Naive thymus-derived CD4-positive, alpha-beta T cell (primary cell): ENCODE measurements at regions of chr19 and their contacts with region 1.

Region 1: GRCh38 chr19:38899447-38900219 is at the starts of genes NFKBIB and SIRT2:
- DNase-seq: peak; percentile 86 to 100 (median 99)
- ATAC-seq: peak; percentile 93
- H3K4me3 ChIP-seq: peak within 1 kb of the TSS; percentile 74
- H3K4me3 Mint-ChIP-seq: peak within 1 kb of the TSS; percentile 88 to 100 (median 96)
- H3K27ac ChIP-seq: peak within 1 kb of the TSS; percentile 97
- H3K27ac Mint-ChIP-seq: peak within 1 kb of the TSS; percentile 86 to 99 (median 94)
- H3K4me1 ChIP-seq: peaks cover 15 to 29% of the 10 kb centered on the region in 2 donors
- H3K4me1 Mint-ChIP-seq: peaks cover 27 to 74% (median 50%) of the 10 kb centered on the region in 7 donors
- H3K27me3 ChIP-seq: no peaks in the 10 kb centered on the region
- H3K27me3 Mint-ChIP-seq: no peaks in the 10 kb centered on the region
- total RNA-seq, gene NFKBIB: 21.7 to 51.8 (median 34.1) TPM
- total RNA-seq, gene SIRT2: 42.9 to 78.5 (median 54.0) TPM

Region 2: GRCh38 chr19:38666663-38667511 is 232.7 kb before region 1 on chr19:
- CTCF ChIA-PET with region 1: no interaction called
- POLR2A ChIA-PET with region 1: no interaction called
- intact Hi-C with region 1: no loop called
- DNase-seq: no peak
- ATAC-seq: peak; percentile 48
- H3K4me3 ChIP-seq: no peak overlapping the region
- H3K4me3 Mint-ChIP-seq: peak overlapping the region in 8 of 10 donors; percentile 7 to 70 (median 28)
- H3K27ac ChIP-seq: no peak overlapping the region
- H3K27ac Mint-ChIP-seq: peak overlapping the region in 1 of 9 donors; percentile 71
- H3K4me1 ChIP-seq: peaks cover 38 to 88% of the 10 kb centered on the region in 2 donors
- H3K4me1 Mint-ChIP-seq: peaks cover 34 to 88% (median 65%) of the 10 kb centered on the region in 7 donors
- H3K27me3 ChIP-seq: peaks cover 0 to 7% of the 10 kb centered on the region in 2 donors
- H3K27me3 Mint-ChIP-seq: peaks cover 0 to 30% (median 25%) of the 10 kb centered on the region in 5 donors

Region 3: DNA sequence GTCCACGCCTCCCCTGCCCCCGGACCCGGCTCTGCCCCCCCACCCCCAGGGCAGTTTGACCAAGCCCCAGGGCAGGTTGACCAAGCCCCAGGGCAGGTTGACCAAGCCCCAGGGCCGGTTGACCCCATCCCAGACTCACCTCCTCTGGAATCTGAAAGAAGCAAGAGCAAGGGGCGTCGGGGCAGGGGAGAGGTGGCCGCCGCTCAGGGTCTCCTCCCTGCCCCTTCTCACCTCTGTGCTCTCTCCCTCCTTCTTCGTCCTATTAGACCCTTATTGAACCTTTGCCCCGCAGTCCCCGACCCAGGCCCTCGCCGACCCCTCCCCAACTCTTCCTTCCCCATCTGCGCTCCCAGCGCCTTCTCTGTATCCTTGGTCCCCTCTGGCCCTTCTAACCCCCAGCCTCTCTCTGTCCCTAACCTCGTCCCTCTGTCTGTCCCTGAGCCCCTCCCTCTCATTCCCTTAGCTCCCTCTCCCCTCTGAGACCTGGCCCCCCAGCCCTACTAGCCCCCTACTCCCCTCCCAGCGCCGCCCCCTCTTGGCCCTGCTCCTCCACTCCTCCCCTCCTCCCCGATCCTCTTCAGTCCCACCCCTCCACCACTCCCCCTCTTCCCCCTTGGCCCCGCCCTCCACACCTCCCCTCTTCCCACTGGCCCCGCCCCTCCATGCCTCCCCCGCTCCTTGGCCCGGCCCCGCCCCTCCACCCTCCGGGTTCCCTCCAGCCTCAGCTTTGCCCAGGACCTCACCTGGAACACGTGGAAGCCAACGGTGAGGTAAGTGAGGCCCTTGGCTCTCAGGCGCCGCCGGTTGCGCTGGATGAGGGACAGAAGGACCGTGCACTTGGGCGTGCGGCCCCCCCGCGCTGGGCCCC is 163.0 kb before region 1 on chr19:
- CTCF ChIA-PET with region 1: no interaction called
- POLR2A ChIA-PET with region 1: no interaction called
- intact Hi-C with region 1: loop called in 1 of 2 experiments (anchors 1 kb)
- DNase-seq: peak in 6 of 9 donors; percentile 31 to 69 (median 41)
- ATAC-seq: peak; percentile 63
- H3K4me3 ChIP-seq: peak overlapping the region; percentile 24
- H3K4me3 Mint-ChIP-seq: peak overlapping the region; percentile 35 to 83 (median 62)
- H3K27ac ChIP-seq: no peak overlapping the region
- H3K27ac Mint-ChIP-seq: peak overlapping the region in 5 of 9 donors; percentile 13 to 76 (median 36)
- H3K4me1 ChIP-seq: peaks cover 15 to 27% of the 10 kb centered on the region in 2 donors
- H3K4me1 Mint-ChIP-seq: peaks cover 7 to 47% (median 29%) of the 10 kb centered on the region in 7 donors
- H3K27me3 ChIP-seq: no peaks in the 10 kb centered on the region
- H3K27me3 Mint-ChIP-seq: peaks cover 0 to 10% (median 0%) of the 10 kb centered on the region in 5 donors

Region 4: DNA sequence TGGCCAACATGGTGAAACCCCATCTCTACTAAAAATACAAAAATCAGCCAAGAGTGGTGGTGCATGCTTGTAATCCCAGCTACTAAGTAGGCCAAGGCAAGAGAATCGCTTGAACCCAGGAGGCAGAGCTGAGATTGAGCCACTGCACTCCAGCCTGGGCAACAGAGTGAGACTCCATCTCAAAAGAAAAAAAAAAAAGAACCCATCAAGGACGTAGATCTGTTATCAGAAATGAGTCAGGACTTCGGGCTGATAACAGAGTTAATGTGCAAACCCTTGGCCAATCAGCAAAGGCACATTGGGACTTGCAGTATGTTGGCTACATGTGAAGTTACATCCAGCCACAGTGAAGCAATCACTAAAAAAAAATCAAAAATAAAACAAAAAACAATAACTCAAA is 115.4 kb before region 1 on chr19:
- CTCF ChIA-PET with region 1: no interaction called
- POLR2A ChIA-PET with region 1: no interaction called
- intact Hi-C with region 1: no loop called
- DNase-seq: no peak
- ATAC-seq: no peak
- H3K4me3 ChIP-seq: no peak overlapping the region
- H3K4me3 Mint-ChIP-seq: no peak overlapping the region
- H3K27ac ChIP-seq: no peak overlapping the region
- H3K27ac Mint-ChIP-seq: no peak overlapping the region
- H3K4me1 ChIP-seq: no peaks in the 10 kb centered on the region
- H3K4me1 Mint-ChIP-seq: no peaks in the 10 kb centered on the region
- H3K27me3 ChIP-seq: no peaks in the 10 kb centered on the region
- H3K27me3 Mint-ChIP-seq: peaks cover 0 to 22% (median 0%) of the 10 kb centered on the region in 5 donors

Region 5: DNA sequence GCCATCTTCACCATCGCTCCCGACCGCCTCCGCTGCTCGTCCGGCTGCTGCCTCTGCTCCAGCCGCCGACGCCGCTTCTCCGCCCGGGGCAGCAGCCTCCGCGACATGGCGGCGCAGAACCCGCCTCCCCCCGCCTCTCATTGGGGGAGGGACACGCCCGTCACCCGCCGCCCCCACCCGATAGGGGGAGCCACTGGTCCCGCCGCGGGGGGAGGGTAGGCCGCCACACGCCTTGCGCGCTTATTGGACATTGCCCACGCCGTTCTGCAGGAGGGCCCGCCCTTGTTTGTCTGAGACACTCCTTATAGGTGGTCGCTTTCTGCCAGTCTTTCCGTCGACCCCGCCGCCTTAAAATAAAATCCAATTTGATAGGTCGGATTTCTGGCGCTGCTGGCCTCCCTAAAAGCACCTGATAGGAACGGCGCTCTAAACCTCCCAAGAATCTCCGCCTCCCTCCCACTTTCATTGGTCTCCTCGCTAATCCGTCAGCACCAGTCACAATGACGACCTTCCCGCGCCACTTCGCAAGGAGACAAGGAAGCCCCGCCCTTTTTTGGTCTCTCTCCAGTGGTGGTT is 49.7 kb before region 1 on chr19 and contains the start of gene HNRNPL:
- CTCF ChIA-PET with region 1: no interaction called
- POLR2A ChIA-PET with region 1: interaction called, 11 read pairs
- intact Hi-C with region 1: loop called (anchors 1 kb)
- DNase-seq: peak; percentile 99 to 100 (median 100)
- ATAC-seq: peak; percentile 78
- H3K4me3 ChIP-seq: peak within 1 kb of the TSS; percentile 81
- H3K4me3 Mint-ChIP-seq: peak within 1 kb of the TSS; percentile 88 to 99 (median 96)
- H3K27ac ChIP-seq: peak within 1 kb of the TSS; percentile 96
- H3K27ac Mint-ChIP-seq: peak within 1 kb of the TSS; percentile 94 to 100 (median 99)
- H3K4me1 ChIP-seq: peaks cover 24 to 41% of the 10 kb centered on the region in 2 donors
- H3K4me1 Mint-ChIP-seq: peaks cover 30 to 67% (median 50%) of the 10 kb centered on the region in 7 donors
- H3K27me3 ChIP-seq: no peaks in the 10 kb centered on the region
- H3K27me3 Mint-ChIP-seq: peaks cover 0 to 5% (median 0%) of the 10 kb centered on the region in 5 donors
- total RNA-seq, gene HNRNPL: 339 to 539 (median 505) TPM

Region 6: GRCh38 chr19:38877781-38878574 is 21.7 kb before region 1 on chr19 and contains the start of gene RINL:
- CTCF ChIA-PET with region 1: no interaction called
- POLR2A ChIA-PET with region 1: interaction called, 12 read pairs
- intact Hi-C with region 1: loop called (anchors 1 kb)
- DNase-seq: peak; percentile 41 to 78 (median 74)
- ATAC-seq: peak; percentile 94
- H3K4me3 ChIP-seq: peak within 1 kb of the TSS; percentile 60
- H3K4me3 Mint-ChIP-seq: peak within 1 kb of the TSS; percentile 58 to 98 (median 88)
- H3K27ac ChIP-seq: peak within 1 kb of the TSS; percentile 93
- H3K27ac Mint-ChIP-seq: peak within 1 kb of the TSS; percentile 95 to 99 (median 97)
- H3K4me1 ChIP-seq: peaks cover 22 to 30% of the 10 kb centered on the region in 2 donors
- H3K4me1 Mint-ChIP-seq: peaks cover 15 to 47% (median 30%) of the 10 kb centered on the region in 7 donors
- H3K27me3 ChIP-seq: no peaks in the 10 kb centered on the region
- H3K27me3 Mint-ChIP-seq: no peaks in the 10 kb centered on the region
- total RNA-seq, gene RINL: 32.8 to 75.9 (median 64.0) TPM

Region 7: GRCh38 chr19:38917516-38918491 is 18.2 kb after region 1 on chr19:
- CTCF ChIA-PET with region 1: no interaction called
- POLR2A ChIA-PET with region 1: no interaction called
- intact Hi-C with region 1: no loop called
- DNase-seq: no peak
- ATAC-seq: no peak
- H3K4me3 ChIP-seq: no peak overlapping the region
- H3K4me3 Mint-ChIP-seq: no peak overlapping the region
- H3K27ac ChIP-seq: no peak overlapping the region
- H3K27ac Mint-ChIP-seq: no peak overlapping the region
- H3K4me1 ChIP-seq: no peaks in the 10 kb centered on the region
- H3K4me1 Mint-ChIP-seq: peaks cover 0 to 4% (median 0%) of the 10 kb centered on the region in 7 donors
- H3K27me3 ChIP-seq: no peaks in the 10 kb centered on the region
- H3K27me3 Mint-ChIP-seq: no peaks in the 10 kb centered on the region